ENCODE measurements at regions of chr5 and their contacts with region 1.

Region 1: DNA sequence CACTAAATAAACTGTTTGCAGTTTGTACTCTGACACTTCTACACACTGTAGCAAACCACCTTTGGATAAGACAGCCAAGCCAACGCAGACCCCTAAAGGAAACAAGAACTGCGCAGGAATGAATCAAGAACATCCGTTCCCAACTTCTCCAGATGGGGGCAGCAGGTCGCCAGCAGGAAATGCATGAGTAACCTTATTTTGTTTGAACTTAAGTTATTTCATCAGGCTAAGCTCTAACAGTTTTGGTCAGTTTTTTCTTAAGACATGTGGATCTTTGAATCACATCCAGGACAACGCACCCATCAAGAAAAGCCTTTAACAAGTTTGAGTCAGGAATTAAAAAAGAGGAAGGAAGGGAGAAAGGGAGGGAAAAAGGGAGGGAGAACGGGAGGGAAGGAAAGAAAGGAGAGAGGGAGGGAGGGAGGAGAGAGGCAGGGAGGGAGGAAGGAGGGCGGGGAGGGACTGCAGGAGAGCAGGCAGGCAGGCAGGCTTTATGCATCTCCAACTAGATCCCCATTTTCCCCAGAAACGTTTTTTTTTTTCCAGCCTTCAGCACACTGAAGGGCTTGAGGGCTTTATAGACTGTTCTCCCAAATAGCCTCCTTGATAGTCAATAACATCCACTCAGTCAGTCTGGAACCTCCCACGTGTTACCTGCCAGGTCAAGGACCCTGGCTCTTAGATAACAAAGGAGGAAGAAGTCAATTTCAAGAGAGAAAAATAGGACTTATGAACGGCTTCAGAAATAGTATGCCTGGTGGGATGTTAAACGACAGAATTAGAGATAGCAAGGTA is 22.2 kb downstream of the BHMT start:
- DNase-seq: peak; percentile 66
- ATAC-seq: peak; percentile 93

Region 2: GRCh38 chr5:79025054-79025472 is 108.8 kb before region 1 on chr5:
- intact Hi-C with region 1: loop called (anchors 2 kb)
- DNase-seq: peak; percentile 62
- ATAC-seq: peak; percentile 87

Region 3: GRCh38 chr5:79181419-79182022 is 47.7 kb after region 1 on chr5:
- intact Hi-C with region 1: no loop called
- DNase-seq: no peak
- ATAC-seq: peak; percentile 75

Region 4: DNA sequence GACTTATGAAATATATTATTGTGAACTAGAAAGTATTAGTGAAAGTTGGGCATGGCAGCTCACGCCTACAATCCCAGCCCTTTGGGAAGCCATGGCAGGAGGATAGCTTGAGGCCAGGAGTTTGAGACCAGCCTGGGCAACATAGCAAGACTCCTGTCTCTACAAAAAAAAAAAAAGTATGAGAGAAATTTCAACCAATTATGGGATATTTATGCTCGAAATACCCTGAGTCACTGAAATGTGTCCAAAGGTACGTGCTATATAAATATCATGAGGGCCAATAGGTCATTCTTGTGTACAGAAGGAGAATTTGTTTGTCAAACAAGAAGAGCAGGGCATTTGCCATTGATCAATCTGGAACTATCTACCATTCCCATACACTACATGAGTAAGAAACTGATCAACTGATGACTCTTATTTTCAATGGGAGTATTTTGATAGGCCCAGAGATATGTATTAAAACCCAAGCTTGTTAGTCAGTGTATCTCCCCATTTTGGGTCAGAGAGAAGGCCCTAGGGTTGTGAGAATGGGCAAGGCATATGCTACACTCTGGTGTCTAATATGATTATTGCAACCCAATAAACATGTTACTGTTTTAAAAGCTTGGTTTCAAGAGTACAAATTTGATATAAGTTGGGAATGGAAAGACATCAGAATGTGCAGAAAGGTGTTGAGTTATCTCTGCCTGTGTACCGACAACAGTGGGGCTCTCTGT is 401.8 kb after region 1 on chr5:
- intact Hi-C with region 1: loop called (anchors 10 kb)
- DNase-seq: no peak
- ATAC-seq: peak; percentile 52

Measured in Right ventricle myocardium superior (tissue), 1 donor.